ENCODE measurements at regions of chr1 and their contacts with region 1.

Region 1: GRCh38 chr1:224747578-224747977 is 131.5 kb downstream of the CNIH3 start:
- DNase-seq: no peak
- ATAC-seq: peak; percentile 45
- H3K4me3 ChIP-seq: no peak overlapping the region
- H3K27ac ChIP-seq: no peak overlapping the region
- H3K4me1 ChIP-seq: peaks cover 53% of the 10 kb centered on the region
- H3K27me3 ChIP-seq: no peaks in the 10 kb centered on the region
- CTCF ChIP-seq: no peak
- EP300 ChIP-seq: no peak
- POLR2A ChIP-seq: no peak
- RAD21 ChIP-seq: no peak

Region 2: GRCh38 chr1:224759681-224760091 is 12.1 kb after region 1 on chr1:
- CTCF ChIA-PET with region 1: interaction called, 7 read pairs
- POLR2A ChIA-PET with region 1: interaction called, 5 read pairs
- RAD21 ChIA-PET with region 1: interaction called, 174 read pairs
- SMC1A ChIA-PET with region 1: interaction called, 16 read pairs
- in situ Hi-C with region 1: no loop called
- intact Hi-C with region 1: no loop called
- DNase-seq: no peak
- ATAC-seq: no peak
- H3K4me3 ChIP-seq: no peak overlapping the region
- H3K27ac ChIP-seq: no peak overlapping the region
- H3K4me1 ChIP-seq: no peaks in the 10 kb centered on the region
- H3K27me3 ChIP-seq: no peaks in the 10 kb centered on the region
- CTCF ChIP-seq: no peak
- EP300 ChIP-seq: no peak
- POLR2A ChIP-seq: no peak
- RAD21 ChIP-seq: no peak

Region 3: GRCh38 chr1:225026701-225027100 is 279.1 kb after region 1 on chr1:
- CTCF ChIA-PET with region 1: no interaction called
- POLR2A ChIA-PET with region 1: no interaction called
- RAD21 ChIA-PET with region 1: no interaction called
- SMC1A ChIA-PET with region 1: no interaction called
- in situ Hi-C with region 1: no loop called
- intact Hi-C with region 1: no loop called
- DNase-seq: no peak
- ATAC-seq: no peak
- H3K4me3 ChIP-seq: no peak overlapping the region
- H3K27ac ChIP-seq: no peak overlapping the region
- H3K4me1 ChIP-seq: no peaks in the 10 kb centered on the region
- H3K27me3 ChIP-seq: no peaks in the 10 kb centered on the region
- CTCF ChIP-seq: no peak
- EP300 ChIP-seq: no peak
- POLR2A ChIP-seq: no peak
- RAD21 ChIP-seq: no peak